Right lobe of liver (tissue), 6 donors: ENCODE measurements at regions of chr10 and their contacts with region 1.

Region 1: GRCh38 chr10:93376372-93377293 is 105.5 kb downstream of the MYOF start:
- DNase-seq: no peak
- ATAC-seq: peak; percentile 92 to 95 (median 94)
- H3K4me3 ChIP-seq: no peak overlapping the region
- H3K27ac ChIP-seq: peak overlapping the region in 1 of 3 donors; percentile 15
- H3K4me1 ChIP-seq: peaks cover 0 to 6% (median 0%) of the 10 kb centered on the region in 4 donors
- H3K27me3 ChIP-seq: no peaks in the 10 kb centered on the region
- CTCF ChIP-seq: peak; percentile 86 to 99 (median 88)
- POLR2A ChIP-seq: no peak

Region 2: DNA sequence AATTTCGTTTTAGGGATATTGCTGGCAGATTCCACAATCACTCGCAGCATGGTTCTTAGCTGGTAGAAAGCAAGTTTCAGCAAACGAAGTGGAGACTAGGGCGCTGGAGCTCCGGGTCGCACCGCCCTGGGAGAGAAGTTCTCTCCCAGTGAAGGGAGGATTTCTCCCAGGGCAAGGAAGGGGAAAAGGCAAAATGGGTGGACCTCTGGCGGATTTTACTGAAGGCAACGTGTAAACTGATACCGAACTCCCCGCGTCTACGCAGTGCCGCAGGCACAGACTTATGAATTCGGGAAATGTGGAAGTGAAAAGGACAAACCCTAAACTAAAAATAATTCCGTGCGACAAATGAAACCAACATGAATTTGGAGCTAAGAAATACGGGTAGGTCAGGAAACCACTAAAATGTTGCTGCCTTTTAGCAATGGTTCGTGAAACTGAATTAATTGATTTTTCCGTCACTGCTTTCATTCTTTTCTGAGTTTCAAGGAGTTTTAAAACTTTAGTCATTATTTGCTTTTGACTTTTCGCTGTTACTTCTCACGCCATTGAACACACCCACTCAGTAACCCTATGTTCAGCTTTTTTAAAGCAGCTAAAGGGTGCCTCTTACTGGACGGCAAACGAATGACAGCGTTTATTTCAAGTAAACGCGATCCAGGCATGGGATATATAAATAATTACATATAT is 105.7 kb after region 1 on chr10 and contains the start of gene MYOF:
- intact Hi-C with region 1: loop called (anchors 5 to 10 kb)
- DNase-seq: peak in 2 of 3 donors; percentile 26 to 55
- ATAC-seq: peak; percentile 92 to 95 (median 94)
- H3K4me3 ChIP-seq: peak within 1 kb of the TSS; percentile 60 to 69 (median 62)
- H3K27ac ChIP-seq: peak within 1 kb of the TSS; percentile 48 to 85 (median 66)
- H3K4me1 ChIP-seq: no peaks in the 10 kb centered on the region
- H3K27me3 ChIP-seq: no peaks in the 10 kb centered on the region
- CTCF ChIP-seq: peak; percentile 56 to 70 (median 62)
- POLR2A ChIP-seq: no peak
- total RNA-seq, gene MYOF: 1.9 to 14.6 (median 3.2) TPM